MCF 10A (cell line): ENCODE measurements at regions of chr1 and their contacts with region 1.

Region 1: GRCh38 chr1:220013497-220013896 is 32.8 kb downstream of the EPRS1 start:
- DNase-seq: peak; percentile 51
- H3K4me3 Mint-ChIP-seq: no peak overlapping the region
- H3K27ac Mint-ChIP-seq: peak overlapping the region; percentile 59
- H3K4me1 Mint-ChIP-seq: peaks cover 24% of the 10 kb centered on the region
- H3K27me3 Mint-ChIP-seq: no peaks in the 10 kb centered on the region
- CTCF ChIP-seq: no peak

Region 2: GRCh38 chr1:219917851-219918466 is 95.5 kb before region 1 on chr1:
- CTCF ChIA-PET with region 1: no interaction called
- POLR2A ChIA-PET with region 1: no interaction called
- intact Hi-C with region 1: no loop called
- DNase-seq: peak; percentile 94
- H3K4me3 Mint-ChIP-seq: no peak overlapping the region
- H3K27ac Mint-ChIP-seq: no peak overlapping the region
- H3K4me1 Mint-ChIP-seq: no peaks in the 10 kb centered on the region
- H3K27me3 Mint-ChIP-seq: peaks cover 43% of the 10 kb centered on the region
- CTCF ChIP-seq: no peak

Region 3: GRCh38 chr1:219999821-220000220 is 13.7 kb before region 1 on chr1:
- CTCF ChIA-PET with region 1: interaction called, 33 read pairs
- POLR2A ChIA-PET with region 1: interaction called, 16 read pairs
- intact Hi-C with region 1: no loop called
- DNase-seq: no peak
- H3K4me3 Mint-ChIP-seq: no peak overlapping the region
- H3K27ac Mint-ChIP-seq: no peak overlapping the region
- H3K4me1 Mint-ChIP-seq: no peaks in the 10 kb centered on the region
- H3K27me3 Mint-ChIP-seq: no peaks in the 10 kb centered on the region
- CTCF ChIP-seq: no peak